Activated naive CD4-positive, alpha-beta T cell treated with anti-CD3 and anti-CD28 coated beads for 36 hours (primary cell): ENCODE measurements at regions of chr12 and their contacts with region 1.

Region 1: GRCh38 chr12:21697904-21698630 is 40.4 kb upstream of the LDHB start:
- DNase-seq: no peak
- H3K4me3 Mint-ChIP-seq: no peak overlapping the region
- H3K27ac Mint-ChIP-seq: no peak overlapping the region
- H3K4me1 Mint-ChIP-seq: peaks cover 11% of the 10 kb centered on the region
- H3K27me3 Mint-ChIP-seq: no peaks in the 10 kb centered on the region

Region 2: GRCh38 chr12:21129906-21130305 is 568.2 kb before region 1 on chr12:
- CTCF ChIA-PET with region 1: no interaction called
- intact Hi-C with region 1: no loop called
- DNase-seq: no peak
- H3K4me3 Mint-ChIP-seq: no peak overlapping the region
- H3K27ac Mint-ChIP-seq: no peak overlapping the region
- H3K4me1 Mint-ChIP-seq: no peaks in the 10 kb centered on the region
- H3K27me3 Mint-ChIP-seq: no peaks in the 10 kb centered on the region

Region 3: DNA sequence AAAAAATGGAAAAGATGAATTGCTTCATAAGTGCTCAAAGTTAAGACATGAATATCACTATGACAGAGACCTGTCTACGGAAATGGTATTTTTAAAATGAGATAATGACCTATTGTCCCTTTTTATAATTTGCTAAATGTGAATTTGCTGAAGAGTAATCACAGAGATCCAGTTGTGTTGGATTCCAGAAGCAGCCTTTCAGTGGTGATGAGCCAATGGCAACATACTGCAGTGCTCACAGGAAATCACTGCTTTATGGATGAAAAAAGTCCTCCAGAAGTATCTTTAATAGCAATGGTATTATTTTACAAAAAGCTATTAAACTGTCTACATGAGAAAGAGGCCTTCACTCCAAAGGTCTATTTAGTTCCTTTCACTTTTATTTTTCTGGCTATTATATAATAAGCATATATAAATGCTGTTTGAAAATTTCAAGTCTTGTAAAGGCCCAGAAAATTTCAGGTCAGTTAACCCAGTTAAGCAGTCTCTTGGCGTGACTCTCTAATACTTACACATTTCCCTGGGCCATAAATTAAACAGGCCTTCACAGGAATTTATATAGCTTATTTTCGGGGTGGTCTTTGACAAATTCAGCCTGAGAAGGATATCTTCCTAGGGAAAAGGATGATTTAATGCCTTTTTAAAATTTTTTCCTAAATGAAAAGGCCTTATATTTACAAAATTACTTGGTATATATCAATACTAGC is 21.0 kb after region 1 on chr12:
- CTCF ChIA-PET with region 1: no interaction called
- intact Hi-C with region 1: no loop called
- DNase-seq: no peak
- H3K4me3 Mint-ChIP-seq: no peak overlapping the region
- H3K27ac Mint-ChIP-seq: no peak overlapping the region
- H3K4me1 Mint-ChIP-seq: no peaks in the 10 kb centered on the region
- H3K27me3 Mint-ChIP-seq: peaks cover 4% of the 10 kb centered on the region

Region 4: GRCh38 chr12:21773263-21773741 is 75.2 kb after region 1 on chr12:
- CTCF ChIA-PET with region 1: no interaction called
- intact Hi-C with region 1: loop called (anchors 5 kb)
- DNase-seq: peak; percentile 38
- H3K4me3 Mint-ChIP-seq: peak overlapping the region; percentile 27
- H3K27ac Mint-ChIP-seq: no peak overlapping the region
- H3K4me1 Mint-ChIP-seq: peaks cover 10% of the 10 kb centered on the region
- H3K27me3 Mint-ChIP-seq: peaks cover 37% of the 10 kb centered on the region

Region 5: DNA sequence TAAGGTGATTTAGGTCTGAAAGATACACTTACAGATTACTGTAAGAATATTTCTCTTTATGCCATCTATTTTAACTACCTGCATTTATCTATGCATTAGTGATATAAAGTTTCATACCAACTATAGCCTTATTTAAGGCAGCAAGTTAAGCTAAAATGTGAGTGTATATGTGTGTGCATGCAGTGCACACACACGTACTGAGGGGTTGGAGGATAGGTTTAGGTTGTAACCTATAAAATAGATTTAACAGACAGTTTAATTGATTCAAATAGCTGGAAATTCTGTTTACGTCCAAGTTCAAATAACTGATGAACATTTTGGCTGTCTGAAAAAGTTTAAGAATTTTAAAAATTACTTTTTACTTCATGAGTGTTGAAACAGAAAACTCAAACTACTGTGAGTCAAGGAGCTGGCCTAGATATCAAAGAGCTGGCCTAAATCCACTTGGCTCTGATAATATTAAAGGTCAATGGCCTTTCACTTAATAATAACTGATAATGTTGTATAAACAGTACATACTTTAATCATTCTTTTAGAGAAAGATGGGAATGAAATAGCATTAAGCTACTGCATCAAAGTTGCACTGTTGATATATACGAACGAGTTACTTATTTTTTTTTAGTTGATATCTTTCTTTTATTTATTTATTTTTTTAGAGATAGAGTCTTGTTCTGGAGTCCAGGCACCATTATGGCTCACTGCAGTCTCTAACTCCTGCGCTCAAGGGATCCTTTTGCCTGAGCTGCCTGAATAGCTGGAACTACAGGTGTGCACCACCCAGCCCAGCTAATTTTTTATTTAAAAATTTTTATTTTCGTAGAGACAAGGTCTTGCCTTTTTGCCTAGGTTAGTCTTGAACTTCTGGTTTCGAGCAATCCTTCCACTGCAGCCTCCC is 90.3 kb after region 1 on chr12:
- CTCF ChIA-PET with region 1: no interaction called
- intact Hi-C with region 1: no loop called
- DNase-seq: no peak
- H3K4me3 Mint-ChIP-seq: no peak overlapping the region
- H3K27ac Mint-ChIP-seq: no peak overlapping the region
- H3K4me1 Mint-ChIP-seq: no peaks in the 10 kb centered on the region
- H3K27me3 Mint-ChIP-seq: peaks cover 10% of the 10 kb centered on the region

Region 6: DNA sequence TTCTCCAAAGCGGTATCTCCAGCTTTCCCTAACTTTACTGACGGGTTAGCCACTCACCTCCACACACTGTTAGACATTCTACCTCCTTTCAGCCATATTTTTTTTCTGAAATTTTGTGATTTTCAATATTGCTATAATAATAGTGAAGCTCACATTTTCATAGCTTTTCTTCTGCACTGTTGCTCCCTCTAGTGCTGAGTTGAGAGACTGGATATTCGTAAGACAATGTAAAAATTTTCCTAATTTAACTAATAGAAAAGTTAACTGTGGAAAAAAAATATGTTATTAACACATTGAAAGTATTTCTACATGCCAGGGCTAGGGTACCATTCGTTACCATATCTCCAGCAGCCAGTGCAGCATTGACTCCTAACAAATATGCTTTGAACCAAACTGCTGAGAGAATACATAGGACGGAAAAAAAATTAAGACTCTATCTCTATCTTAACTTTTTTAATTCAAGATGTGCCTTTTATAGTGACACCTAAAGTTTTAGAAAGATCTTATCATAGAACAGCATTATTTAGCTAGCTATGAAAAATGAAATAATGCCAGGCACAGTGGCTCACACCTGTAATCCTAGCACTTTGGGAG is 291.8 kb after region 1 on chr12:
- CTCF ChIA-PET with region 1: interaction called, 43 read pairs
- intact Hi-C with region 1: loop called (anchors 1 kb)
- DNase-seq: no peak
- H3K4me3 Mint-ChIP-seq: no peak overlapping the region
- H3K27ac Mint-ChIP-seq: no peak overlapping the region
- H3K4me1 Mint-ChIP-seq: peaks cover 7% of the 10 kb centered on the region
- H3K27me3 Mint-ChIP-seq: peaks cover 5% of the 10 kb centered on the region

Region 7: GRCh38 chr12:22008196-22008595 is 310.1 kb after region 1 on chr12:
- CTCF ChIA-PET with region 1: no interaction called
- intact Hi-C with region 1: no loop called
- DNase-seq: no peak
- H3K4me3 Mint-ChIP-seq: no peak overlapping the region
- H3K27ac Mint-ChIP-seq: no peak overlapping the region
- H3K4me1 Mint-ChIP-seq: no peaks in the 10 kb centered on the region
- H3K27me3 Mint-ChIP-seq: no peaks in the 10 kb centered on the region

Region 8: GRCh38 chr12:22083167-22083566 is 385.1 kb after region 1 on chr12:
- CTCF ChIA-PET with region 1: interaction called, 8 read pairs
- intact Hi-C with region 1: loop called (anchors 10 kb)
- DNase-seq: peak; percentile 43
- H3K4me3 Mint-ChIP-seq: no peak overlapping the region
- H3K27ac Mint-ChIP-seq: no peak overlapping the region
- H3K4me1 Mint-ChIP-seq: no peaks in the 10 kb centered on the region
- H3K27me3 Mint-ChIP-seq: no peaks in the 10 kb centered on the region

Region 9: GRCh38 chr12:22443379-22444316 is 745.6 kb after region 1 on chr12:
- CTCF ChIA-PET with region 1: interaction called, 7 read pairs
- intact Hi-C with region 1: loop called (anchors 1 kb)
- DNase-seq: peak; percentile 75
- H3K4me3 Mint-ChIP-seq: no peak overlapping the region
- H3K27ac Mint-ChIP-seq: no peak overlapping the region
- H3K4me1 Mint-ChIP-seq: peaks cover 3% of the 10 kb centered on the region
- H3K27me3 Mint-ChIP-seq: no peaks in the 10 kb centered on the region